WTC11 (cell line): ENCODE measurements at regions of chr19 and their contacts with region 1.

Region 1: GRCh38 chr19:52248241-52248640 is 21.1 kb upstream of the ZNF766 start:
- DNase-seq: peak; percentile 72
- ATAC-seq: peak; percentile 92
- H3K4me3 Mint-ChIP-seq: no peak overlapping the region
- H3K27ac Mint-ChIP-seq: no peak overlapping the region
- H3K4me1 Mint-ChIP-seq: no peaks in the 10 kb centered on the region
- H3K27me3 Mint-ChIP-seq: peaks cover 4% of the 10 kb centered on the region
- CTCF ChIP-seq: peak; percentile 32; the same call in 1 of the 2 replicates

Region 2: DNA sequence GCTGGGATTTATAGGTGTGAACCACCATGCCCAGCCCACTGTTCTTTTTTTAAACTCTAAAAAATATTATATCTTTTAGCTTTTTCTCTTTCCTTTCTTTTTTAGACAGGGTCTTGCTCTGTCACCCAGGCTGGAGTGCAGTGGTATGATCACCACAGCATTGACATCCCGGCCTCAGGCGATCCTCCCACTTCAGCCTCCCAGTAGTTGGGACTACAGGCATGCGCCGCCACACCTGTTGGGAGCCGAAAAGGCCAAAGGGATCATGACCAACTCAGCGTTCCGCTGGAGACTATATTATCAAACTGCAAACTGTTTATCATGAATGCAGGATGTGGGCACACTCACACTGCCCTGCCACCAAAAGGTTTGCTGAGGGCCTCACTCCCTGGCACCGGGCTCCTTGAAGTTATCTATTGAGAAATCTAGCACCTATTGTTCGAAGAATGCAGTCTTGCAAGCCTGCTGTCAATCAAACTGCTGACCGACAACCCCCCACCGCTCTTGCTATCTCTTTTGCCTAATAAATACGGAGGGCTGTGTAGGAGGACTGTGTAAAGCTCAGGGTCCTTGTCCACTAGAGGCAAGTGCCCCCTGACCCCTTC is 71.8 kb before region 1 on chr19:
- CTCF ChIA-PET with region 1: no interaction called
- POLR2A ChIA-PET with region 1: no interaction called
- DNase-seq: no peak
- ATAC-seq: no peak
- H3K4me3 Mint-ChIP-seq: no peak overlapping the region
- H3K27ac Mint-ChIP-seq: no peak overlapping the region
- H3K4me1 Mint-ChIP-seq: peaks cover 20% of the 10 kb centered on the region
- H3K27me3 Mint-ChIP-seq: no peaks in the 10 kb centered on the region
- CTCF ChIP-seq: no peak

Region 3: GRCh38 chr19:52258426-52258825 is 10.2 kb after region 1 on chr19:
- CTCF ChIA-PET with region 1: interaction called, 14 read pairs
- POLR2A ChIA-PET with region 1: no interaction called
- DNase-seq: no peak
- ATAC-seq: no peak
- H3K4me3 Mint-ChIP-seq: no peak overlapping the region
- H3K27ac Mint-ChIP-seq: no peak overlapping the region
- H3K4me1 Mint-ChIP-seq: no peaks in the 10 kb centered on the region
- H3K27me3 Mint-ChIP-seq: peaks cover 16% of the 10 kb centered on the region
- CTCF ChIP-seq: no peak

Region 4: GRCh38 chr19:52322429-52322828 is 74.2 kb after region 1 on chr19:
- CTCF ChIA-PET with region 1: no interaction called
- POLR2A ChIA-PET with region 1: no interaction called
- DNase-seq: no peak
- ATAC-seq: no peak
- H3K4me3 Mint-ChIP-seq: no peak overlapping the region
- H3K27ac Mint-ChIP-seq: no peak overlapping the region
- H3K4me1 Mint-ChIP-seq: no peaks in the 10 kb centered on the region
- H3K27me3 Mint-ChIP-seq: peaks cover 42% of the 10 kb centered on the region
- CTCF ChIP-seq: no peak